IMR-90 (cell line): ENCODE measurements at regions of chr3 and their contacts with region 1.

Region 1: GRCh38 chr3:14124615-14125190 is at the starts of genes CHCHD4 and TMEM43:
- DNase-seq: peak; percentile 99
- ATAC-seq: peak; percentile 84
- H3K4me3 ChIP-seq: peak within 1 kb of the TSS; percentile 64
- H3K27ac ChIP-seq: peak within 1 kb of the TSS; percentile 77
- H3K4me1 ChIP-seq: peaks cover 15% of the 10 kb centered on the region
- H3K27me3 ChIP-seq: no peaks in the 10 kb centered on the region
- CTCF ChIP-seq: no peak
- POLR2A ChIP-seq: peak; percentile 93
- RAD21 ChIP-seq: no peak
- total RNA-seq, gene CHCHD4: 9.0 and 12.2 TPM in 2 replicates
- total RNA-seq, gene TMEM43: 103 and 114 TPM in 2 replicates

Region 2: GRCh38 chr3:13479581-13480339 is 644.9 kb before region 1 on chr3 and contains the start of gene HDAC11:
- CTCF ChIA-PET with region 1: no interaction called
- POLR2A ChIA-PET with region 1: no interaction called
- dilution Hi-C with region 1: no loop called
- in situ Hi-C with region 1: loop called (anchors 25 kb)
- intact Hi-C with region 1: no loop called
- DNase-seq: peak; percentile 95
- ATAC-seq: peak; percentile 98
- H3K4me3 ChIP-seq: peak within 1 kb of the TSS; percentile 75
- H3K27ac ChIP-seq: peak within 1 kb of the TSS; percentile 69
- H3K4me1 ChIP-seq: peaks cover 6% of the 10 kb centered on the region; the same call in 1 of the 2 replicates
- H3K27me3 ChIP-seq: no peaks in the 10 kb centered on the region
- CTCF ChIP-seq: peak; percentile 18; the same call in 1 of the 2 replicates
- POLR2A ChIP-seq: no peak
- RAD21 ChIP-seq: no peak
- total RNA-seq, gene HDAC11: 6.1 and 9.1 TPM in 2 replicates

Region 3: GRCh38 chr3:13657660-13658435 is 466.9 kb before region 1 on chr3:
- CTCF ChIA-PET with region 1: interaction called, 6 read pairs
- POLR2A ChIA-PET with region 1: no interaction called
- dilution Hi-C with region 1: no loop called
- in situ Hi-C with region 1: no loop called
- intact Hi-C with region 1: loop called (anchors 5 kb)
- DNase-seq: peak; percentile 22
- ATAC-seq: peak; percentile 96
- H3K4me3 ChIP-seq: no peak overlapping the region
- H3K27ac ChIP-seq: no peak overlapping the region
- H3K4me1 ChIP-seq: no peaks in the 10 kb centered on the region
- H3K27me3 ChIP-seq: peaks cover 6% of the 10 kb centered on the region; the same call in 1 of the 2 replicates
- CTCF ChIP-seq: peak; percentile 75
- POLR2A ChIP-seq: no peak
- RAD21 ChIP-seq: peak; percentile 66

Region 4: GRCh38 chr3:14042680-14043079 is 82.0 kb before region 1 on chr3:
- CTCF ChIA-PET with region 1: no interaction called
- POLR2A ChIA-PET with region 1: no interaction called
- dilution Hi-C with region 1: no loop called
- in situ Hi-C with region 1: loop called (anchors 25 kb)
- intact Hi-C with region 1: no loop called
- DNase-seq: peak; percentile 48
- ATAC-seq: peak; percentile 53
- H3K4me3 ChIP-seq: no peak overlapping the region
- H3K27ac ChIP-seq: no peak overlapping the region
- H3K4me1 ChIP-seq: no peaks in the 10 kb centered on the region
- H3K27me3 ChIP-seq: no peaks in the 10 kb centered on the region
- CTCF ChIP-seq: no peak
- POLR2A ChIP-seq: no peak
- RAD21 ChIP-seq: no peak

Region 5: GRCh38 chr3:14144423-14145075 is 19.8 kb after region 1 on chr3:
- CTCF ChIA-PET with region 1: interaction called, 11 read pairs
- POLR2A ChIA-PET with region 1: interaction called, 6 read pairs
- dilution Hi-C with region 1: no loop called
- in situ Hi-C with region 1: no loop called
- intact Hi-C with region 1: loop called (anchors 1 kb)
- DNase-seq: peak; percentile 99
- ATAC-seq: peak; percentile 62
- H3K4me3 ChIP-seq: no peak overlapping the region
- H3K27ac ChIP-seq: peak overlapping the region; percentile 97
- H3K4me1 ChIP-seq: peaks cover 29% of the 10 kb centered on the region
- H3K27me3 ChIP-seq: no peaks in the 10 kb centered on the region
- CTCF ChIP-seq: no peak
- POLR2A ChIP-seq: peak; percentile 72
- RAD21 ChIP-seq: no peak

Region 6: DNA sequence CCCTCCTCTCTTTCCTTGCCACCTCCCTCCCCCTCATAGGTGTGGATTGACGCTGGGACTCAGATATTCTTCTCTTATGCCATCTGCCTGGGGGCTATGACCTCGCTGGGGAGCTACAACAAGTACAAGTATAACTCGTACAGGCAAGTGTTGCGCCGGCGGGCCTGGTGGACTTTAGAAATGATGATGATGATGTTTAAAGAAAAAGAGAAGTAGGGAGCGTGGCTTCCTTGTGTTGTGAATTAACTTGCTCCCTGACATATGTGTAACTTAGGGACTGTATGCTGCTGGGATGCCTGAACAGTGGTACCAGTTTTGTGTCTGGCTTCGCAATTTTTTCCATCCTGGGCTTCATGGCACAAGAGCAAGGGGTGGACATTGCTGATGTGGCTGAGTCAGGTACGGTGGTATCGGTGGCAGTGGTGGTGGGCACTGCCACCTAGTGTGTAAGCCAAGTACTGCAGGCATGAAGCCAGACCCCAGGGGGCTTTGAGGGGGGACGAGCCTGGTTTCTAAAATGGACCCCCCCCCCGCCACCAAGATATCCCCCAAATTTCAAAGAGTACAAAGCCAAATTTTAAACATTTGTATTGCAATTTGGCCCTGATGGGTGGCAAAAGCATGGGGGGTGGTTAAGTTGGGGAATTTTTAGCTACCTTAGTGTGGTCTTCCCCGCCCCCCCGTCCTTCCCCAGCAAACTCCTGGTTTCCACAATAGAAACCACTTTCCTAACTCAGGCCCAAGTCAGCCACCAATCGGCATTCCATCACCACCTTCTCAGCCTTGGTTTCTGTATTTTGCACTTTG is 343.3 kb after region 1 on chr3:
- CTCF ChIA-PET with region 1: interaction called, 4 read pairs
- POLR2A ChIA-PET with region 1: no interaction called
- dilution Hi-C with region 1: no loop called
- in situ Hi-C with region 1: no loop called
- intact Hi-C with region 1: loop called (anchors 5 kb)
- DNase-seq: peak; percentile 46
- ATAC-seq: peak; percentile 64
- H3K4me3 ChIP-seq: no peak overlapping the region
- H3K27ac ChIP-seq: no peak overlapping the region
- H3K4me1 ChIP-seq: peaks cover 12% of the 10 kb centered on the region
- H3K27me3 ChIP-seq: no peaks in the 10 kb centered on the region
- CTCF ChIP-seq: peak; percentile 81
- POLR2A ChIP-seq: no peak
- RAD21 ChIP-seq: peak; percentile 91